HAP-1 (cell line): ENCODE measurements at regions of chr15 and their contacts with region 1.

Region 1: DNA sequence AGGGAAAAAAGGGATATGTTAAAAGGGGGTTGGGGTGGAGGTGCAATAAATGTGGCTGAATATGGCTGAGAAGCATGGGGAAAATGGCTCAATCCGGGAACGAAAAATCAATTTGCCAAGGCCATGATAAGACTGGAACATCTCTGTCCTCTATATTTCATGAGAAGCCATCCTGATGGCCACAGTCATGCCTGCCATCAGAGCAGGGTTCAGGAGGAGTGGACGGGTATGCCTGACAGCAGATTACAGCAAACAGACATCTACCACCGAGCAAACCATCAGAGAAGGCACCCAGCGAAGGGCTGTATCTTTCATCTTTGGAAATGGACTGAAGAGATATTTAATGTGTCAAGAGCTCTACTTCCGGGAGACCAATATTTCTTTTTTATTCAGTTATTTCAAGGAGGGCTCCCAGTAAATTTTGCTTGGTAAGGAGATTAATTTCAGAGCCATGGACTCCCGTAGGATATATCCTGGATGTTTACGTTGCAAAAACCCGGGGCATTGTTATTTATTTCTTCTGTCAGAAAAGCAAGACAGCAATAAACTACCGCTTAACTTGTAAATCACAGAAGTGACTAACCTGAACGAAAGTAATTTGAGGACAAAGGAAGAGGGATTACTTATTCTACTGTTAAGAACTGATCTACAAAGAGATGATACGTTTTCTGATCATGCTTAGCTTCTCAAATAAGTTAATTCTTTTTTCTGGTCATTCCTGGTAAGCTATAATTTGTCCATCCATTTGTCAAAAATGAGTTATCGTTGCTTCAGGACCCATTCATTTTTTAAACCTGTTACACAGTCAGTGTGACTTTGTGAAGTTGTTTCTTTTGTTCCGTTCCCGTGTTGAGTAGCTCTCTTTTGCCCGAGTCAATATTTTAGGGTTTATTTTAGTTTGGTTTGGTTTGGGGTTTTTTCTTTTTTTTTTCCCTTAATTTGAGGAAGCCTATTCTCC is 80.6 kb upstream of the CHD2 start:
- DNase-seq: peak in 1 of 2 experiments; percentile 85
- H3K4me3 ChIP-seq: peak overlapping the region; percentile 18
- H3K4me1 ChIP-seq: peaks cover 42% of the 10 kb centered on the region
- H3K27me3 ChIP-seq: no peaks in the 10 kb centered on the region

Region 2: DNA sequence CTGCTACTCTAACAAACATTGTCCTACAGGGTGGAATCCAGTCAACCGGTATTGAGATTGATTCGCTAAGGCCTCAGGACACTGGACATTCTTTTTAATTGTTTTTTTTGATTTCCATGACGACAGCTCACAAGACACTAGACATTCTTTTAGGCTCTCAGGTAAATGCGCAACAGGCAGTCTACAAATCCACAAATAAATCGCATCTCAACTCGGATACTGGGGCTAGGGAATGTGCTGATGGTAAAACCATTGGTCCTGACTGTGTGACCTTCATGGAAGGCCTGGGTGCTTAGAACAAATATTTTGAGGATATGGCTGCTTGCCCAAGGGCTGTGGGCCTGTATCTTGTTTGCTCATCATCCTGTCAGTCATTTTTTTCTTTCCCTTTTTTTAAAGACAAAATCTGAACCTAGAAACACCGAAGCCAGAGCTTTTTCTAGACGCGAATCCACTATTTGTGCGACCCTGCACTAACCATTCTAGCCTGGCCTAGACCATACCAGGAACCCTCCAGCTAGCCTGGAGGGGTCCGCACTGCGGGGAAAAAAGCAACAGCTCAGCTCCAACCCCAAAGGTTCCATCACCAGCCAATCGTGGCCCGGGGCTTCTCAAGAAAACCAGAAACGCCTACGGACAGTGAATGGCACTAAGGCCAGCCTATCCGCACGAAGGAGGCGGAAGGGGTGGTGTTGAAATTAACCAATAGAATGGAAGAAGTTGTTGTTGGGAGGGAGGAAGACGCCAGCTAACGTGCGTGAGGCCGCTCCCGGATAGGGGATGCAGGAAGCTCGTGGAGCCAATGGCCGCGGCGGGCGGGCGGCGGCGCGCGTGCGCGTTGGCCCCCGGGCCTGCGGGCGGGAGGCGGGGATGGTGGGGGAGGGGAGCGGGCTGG is 62.5 kb after region 1 on chr15:
- in situ Hi-C with region 1: loop called (anchors 5 kb)
- DNase-seq: peak; percentile 98 to 99
- H3K4me3 ChIP-seq: peak overlapping the region; percentile 58
- H3K4me1 ChIP-seq: peaks cover 43% of the 10 kb centered on the region
- H3K27me3 ChIP-seq: no peaks in the 10 kb centered on the region